ENCODE measurements at regions of chr18 and their contacts with region 1.

Region 1: GRCh38 chr18:76374330-76375281 is 120.4 kb downstream of the ZNF516 start:
- DNase-seq: peak; percentile 72
- ATAC-seq: peak; percentile 69
- H3K4me3 Mint-ChIP-seq: peak overlapping the region; percentile 2
- H3K27ac Mint-ChIP-seq: peak overlapping the region; percentile 82
- H3K4me1 Mint-ChIP-seq: peaks cover 50% of the 10 kb centered on the region
- H3K27me3 Mint-ChIP-seq: no peaks in the 10 kb centered on the region

Region 2: DNA sequence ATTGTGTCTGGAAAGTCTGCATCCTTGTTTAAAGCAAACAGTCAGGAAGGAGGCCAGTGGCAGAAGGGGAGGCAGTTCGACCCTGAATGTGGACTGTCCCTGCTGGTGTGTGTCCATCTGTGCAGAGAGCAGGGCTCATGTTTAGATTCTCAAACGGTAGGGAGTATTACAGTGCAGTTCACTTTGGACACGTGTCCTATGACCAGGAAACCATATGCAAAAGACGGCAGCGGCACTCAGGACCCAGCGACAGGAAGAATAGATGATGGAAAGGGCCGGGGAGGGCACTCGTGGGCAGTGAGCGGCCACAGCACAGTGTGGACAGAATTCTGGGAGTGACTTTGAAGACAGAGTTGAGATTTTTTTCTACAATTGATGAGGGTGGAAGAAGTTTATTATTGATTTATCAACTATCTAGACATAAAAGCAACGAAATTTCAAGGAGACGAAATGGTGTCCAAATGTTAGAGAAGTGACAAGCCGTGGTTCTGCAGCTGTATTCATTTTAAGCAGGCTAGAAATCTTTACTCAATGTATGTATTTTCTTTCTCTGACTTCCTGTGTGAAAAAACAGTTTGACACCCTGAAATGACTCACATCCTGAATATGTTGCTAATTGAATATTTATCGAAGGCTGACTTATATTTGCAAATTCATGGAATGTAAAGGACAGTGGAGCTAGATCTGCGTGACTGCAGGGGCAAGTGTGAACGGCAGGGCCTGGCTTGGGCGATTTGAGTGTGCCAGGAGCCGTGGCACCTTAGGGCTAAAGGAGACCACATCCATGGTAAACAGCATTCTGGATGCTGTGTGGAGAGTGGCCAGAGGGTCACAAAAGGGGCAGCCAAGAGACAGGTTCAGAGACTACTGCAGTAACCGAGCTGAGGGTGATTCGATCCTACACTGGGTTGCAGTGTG is 1379.8 kb before region 1 on chr18:
- CTCF ChIA-PET with region 1: no interaction called
- POLR2A ChIA-PET with region 1: no interaction called
- intact Hi-C with region 1: loop called in 1 of 2 experiments (anchors 10 kb)
- DNase-seq: peak; percentile 38
- ATAC-seq: peak; percentile 84
- H3K4me3 Mint-ChIP-seq: peak overlapping the region; percentile 45
- H3K27ac Mint-ChIP-seq: peak overlapping the region; percentile 65
- H3K4me1 Mint-ChIP-seq: peaks cover 45% of the 10 kb centered on the region
- H3K27me3 Mint-ChIP-seq: no peaks in the 10 kb centered on the region

Region 3: DNA sequence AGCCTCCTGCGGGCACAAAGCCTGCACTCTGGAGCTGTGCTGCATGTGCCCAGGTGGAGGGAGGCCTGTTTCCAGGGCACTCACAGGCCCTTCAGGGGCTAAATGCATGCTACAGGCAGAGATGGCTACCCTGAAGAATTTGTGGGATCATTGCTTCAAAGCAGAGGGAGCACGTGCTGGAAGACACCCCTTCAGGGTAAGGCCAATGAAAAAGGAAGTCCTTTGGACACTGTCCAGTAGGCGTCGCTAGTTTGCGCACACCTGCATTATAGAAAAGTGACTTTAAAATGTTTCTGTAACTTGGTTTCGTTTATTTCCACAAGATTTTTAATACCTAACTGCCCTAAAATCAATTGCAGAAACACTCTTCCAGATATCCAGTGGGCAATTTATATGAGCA is 204.9 kb before region 1 on chr18:
- CTCF ChIA-PET with region 1: no interaction called
- POLR2A ChIA-PET with region 1: no interaction called
- intact Hi-C with region 1: no loop called
- DNase-seq: no peak
- ATAC-seq: no peak
- H3K4me3 Mint-ChIP-seq: no peak overlapping the region
- H3K27ac Mint-ChIP-seq: no peak overlapping the region
- H3K4me1 Mint-ChIP-seq: no peaks in the 10 kb centered on the region
- H3K27me3 Mint-ChIP-seq: peaks cover 2% of the 10 kb centered on the region

Region 4: DNA sequence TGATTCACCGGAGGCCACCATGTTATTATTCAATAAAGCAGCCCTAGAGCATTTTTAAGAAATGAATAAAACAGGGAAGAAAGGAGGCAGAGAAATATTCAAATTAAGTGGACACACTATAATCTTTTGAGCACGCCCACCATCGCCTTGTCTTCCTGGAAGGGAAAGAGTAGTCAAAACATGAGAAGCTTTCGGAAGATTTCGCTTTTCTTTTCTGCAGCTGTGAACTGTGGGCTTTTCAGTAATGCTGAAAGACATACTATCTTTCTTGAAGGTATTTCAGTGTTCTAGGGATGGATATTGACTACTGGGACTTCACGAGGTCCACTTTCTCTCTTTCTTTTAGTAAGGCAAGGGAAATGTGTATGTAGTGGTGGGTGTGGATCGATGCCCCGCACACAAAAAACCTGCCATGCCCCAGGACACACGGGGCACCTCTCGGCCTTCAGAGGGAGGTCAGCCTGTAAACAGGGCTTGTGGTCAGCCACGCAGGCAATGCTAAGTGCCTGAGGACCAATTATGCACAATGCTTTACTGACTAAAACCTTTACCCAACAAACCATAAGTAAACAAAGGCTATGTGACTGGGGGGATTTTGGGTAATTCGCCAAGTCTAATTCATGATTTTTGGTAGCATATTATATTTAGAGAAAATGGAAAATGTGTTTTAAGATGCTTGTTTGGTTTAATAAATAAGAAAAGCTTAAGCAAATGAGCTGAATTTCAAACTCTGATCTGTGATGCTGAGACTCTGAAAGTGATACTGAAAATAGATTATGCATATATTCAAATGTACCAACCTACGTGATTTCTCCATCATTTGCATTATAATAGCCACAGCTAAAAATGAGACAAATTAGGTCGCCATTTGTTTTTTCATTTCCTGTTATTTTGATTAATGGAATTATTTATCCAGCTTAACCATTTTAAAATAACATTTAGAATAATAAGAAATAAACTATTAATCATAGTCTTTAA is 10.0 kb before region 1 on chr18:
- CTCF ChIA-PET with region 1: interaction called, 6 read pairs
- POLR2A ChIA-PET with region 1: no interaction called
- intact Hi-C with region 1: loop called (anchors 1 kb)
- DNase-seq: peak; percentile 66
- ATAC-seq: peak; percentile 81
- H3K4me3 Mint-ChIP-seq: no peak overlapping the region
- H3K27ac Mint-ChIP-seq: peak overlapping the region; percentile 49
- H3K4me1 Mint-ChIP-seq: peaks cover 20% of the 10 kb centered on the region
- H3K27me3 Mint-ChIP-seq: peaks cover 3% of the 10 kb centered on the region

Region 5: DNA sequence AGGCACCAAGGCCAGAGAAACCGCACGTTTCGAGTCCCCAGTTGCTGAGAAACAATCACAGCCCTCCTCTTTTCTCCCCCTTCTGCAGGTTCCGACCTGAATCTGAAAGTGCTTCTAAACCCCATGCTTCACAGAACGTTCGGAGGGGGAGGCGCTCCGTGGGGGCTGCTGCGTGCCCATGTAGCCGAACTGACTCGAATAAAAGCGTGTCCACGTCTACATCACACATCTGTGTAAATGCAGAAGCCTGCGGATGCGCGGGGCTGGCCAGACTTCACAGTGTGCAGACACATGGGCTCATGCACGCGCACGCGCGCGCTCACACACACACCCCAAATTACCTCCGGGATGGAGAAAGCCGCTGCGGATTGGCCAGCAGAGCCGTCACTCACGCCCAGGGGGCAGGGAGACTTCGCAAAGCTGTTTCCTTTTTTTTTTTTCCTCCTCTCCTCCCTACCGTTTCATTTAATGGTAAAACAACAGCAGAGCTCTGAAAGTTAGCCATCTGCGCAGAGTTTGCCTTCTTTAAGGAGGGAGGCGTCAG is 118.1 kb after region 1 on chr18:
- CTCF ChIA-PET with region 1: no interaction called
- POLR2A ChIA-PET with region 1: no interaction called
- intact Hi-C with region 1: loop called (anchors 2 to 10 kb)
- DNase-seq: peak; percentile 100
- ATAC-seq: peak; percentile 85
- H3K4me3 Mint-ChIP-seq: peak overlapping the region; percentile 87
- H3K27ac Mint-ChIP-seq: peak overlapping the region; percentile 89
- H3K4me1 Mint-ChIP-seq: peaks cover 36% of the 10 kb centered on the region
- H3K27me3 Mint-ChIP-seq: peaks cover 33% of the 10 kb centered on the region

Region 6: GRCh38 chr18:76741365-76741764 is 366.8 kb after region 1 on chr18:
- CTCF ChIA-PET with region 1: no interaction called
- POLR2A ChIA-PET with region 1: no interaction called
- intact Hi-C with region 1: no loop called
- DNase-seq: no peak
- ATAC-seq: no peak
- H3K4me3 Mint-ChIP-seq: no peak overlapping the region
- H3K27ac Mint-ChIP-seq: no peak overlapping the region
- H3K4me1 Mint-ChIP-seq: peaks cover 3% of the 10 kb centered on the region
- H3K27me3 Mint-ChIP-seq: peaks cover 7% of the 10 kb centered on the region

Region 7: GRCh38 chr18:76859474-76860339 is 485.1 kb after region 1 on chr18:
- CTCF ChIA-PET with region 1: no interaction called
- POLR2A ChIA-PET with region 1: no interaction called
- intact Hi-C with region 1: loop called in 1 of 2 experiments (anchors 1 kb)
- DNase-seq: peak; percentile 63
- ATAC-seq: peak; percentile 98
- H3K4me3 Mint-ChIP-seq: peak overlapping the region; percentile 41
- H3K27ac Mint-ChIP-seq: peak overlapping the region; percentile 83
- H3K4me1 Mint-ChIP-seq: peaks cover 31% of the 10 kb centered on the region
- H3K27me3 Mint-ChIP-seq: no peaks in the 10 kb centered on the region

Region 8: GRCh38 chr18:77067291-77068061 is 692.9 kb after region 1 on chr18:
- CTCF ChIA-PET with region 1: no interaction called
- POLR2A ChIA-PET with region 1: no interaction called
- intact Hi-C with region 1: loop called (anchors 5 to 10 kb)
- DNase-seq: peak; percentile 85
- ATAC-seq: peak; percentile 50
- H3K4me3 Mint-ChIP-seq: peak overlapping the region; percentile 48
- H3K27ac Mint-ChIP-seq: peak overlapping the region; percentile 94
- H3K4me1 Mint-ChIP-seq: peaks cover 100% of the 10 kb centered on the region
- H3K27me3 Mint-ChIP-seq: no peaks in the 10 kb centered on the region

Region 9: DNA sequence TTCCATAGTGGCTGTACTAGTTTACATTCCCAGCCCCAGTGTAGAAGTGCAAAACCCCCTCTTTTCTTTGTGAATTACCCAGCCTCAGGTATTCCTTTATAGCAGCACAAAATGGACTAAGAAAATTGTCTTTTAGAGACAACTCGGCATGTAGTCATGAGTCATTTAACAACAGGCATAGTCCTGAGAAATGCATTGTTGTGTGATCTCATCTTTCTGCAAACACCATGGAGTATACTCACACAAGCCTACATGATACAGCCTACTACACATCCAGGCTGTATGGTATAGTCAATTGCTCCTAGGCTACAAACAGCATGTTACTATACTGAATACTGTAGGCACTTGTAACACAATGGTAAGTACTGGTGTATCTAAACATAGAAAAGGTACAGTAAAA is 802.4 kb after region 1 on chr18:
- CTCF ChIA-PET with region 1: no interaction called
- POLR2A ChIA-PET with region 1: no interaction called
- intact Hi-C with region 1: no loop called
- DNase-seq: no peak
- ATAC-seq: peak; percentile 36
- H3K4me3 Mint-ChIP-seq: no peak overlapping the region
- H3K27ac Mint-ChIP-seq: no peak overlapping the region
- H3K4me1 Mint-ChIP-seq: no peaks in the 10 kb centered on the region
- H3K27me3 Mint-ChIP-seq: no peaks in the 10 kb centered on the region

Region 10: GRCh38 chr18:77223653-77224052 is 849.0 kb after region 1 on chr18:
- CTCF ChIA-PET with region 1: no interaction called
- POLR2A ChIA-PET with region 1: no interaction called
- intact Hi-C with region 1: loop called in 1 of 2 experiments (anchors 5 kb)
- DNase-seq: no peak
- ATAC-seq: peak; percentile 70
- H3K4me3 Mint-ChIP-seq: no peak overlapping the region
- H3K27ac Mint-ChIP-seq: no peak overlapping the region
- H3K4me1 Mint-ChIP-seq: peaks cover 15% of the 10 kb centered on the region
- H3K27me3 Mint-ChIP-seq: peaks cover 12% of the 10 kb centered on the region